Activated naive CD8-positive, alpha-beta T cell treated with anti-CD3 and anti-CD28 coated beads, Interleukin-2, amount 10 ng/mL, durations not matched to agents 7 days and 5 days (primary cell): ENCODE measurements at regions of chr11 and their contacts with region 1.

Region 1: DNA sequence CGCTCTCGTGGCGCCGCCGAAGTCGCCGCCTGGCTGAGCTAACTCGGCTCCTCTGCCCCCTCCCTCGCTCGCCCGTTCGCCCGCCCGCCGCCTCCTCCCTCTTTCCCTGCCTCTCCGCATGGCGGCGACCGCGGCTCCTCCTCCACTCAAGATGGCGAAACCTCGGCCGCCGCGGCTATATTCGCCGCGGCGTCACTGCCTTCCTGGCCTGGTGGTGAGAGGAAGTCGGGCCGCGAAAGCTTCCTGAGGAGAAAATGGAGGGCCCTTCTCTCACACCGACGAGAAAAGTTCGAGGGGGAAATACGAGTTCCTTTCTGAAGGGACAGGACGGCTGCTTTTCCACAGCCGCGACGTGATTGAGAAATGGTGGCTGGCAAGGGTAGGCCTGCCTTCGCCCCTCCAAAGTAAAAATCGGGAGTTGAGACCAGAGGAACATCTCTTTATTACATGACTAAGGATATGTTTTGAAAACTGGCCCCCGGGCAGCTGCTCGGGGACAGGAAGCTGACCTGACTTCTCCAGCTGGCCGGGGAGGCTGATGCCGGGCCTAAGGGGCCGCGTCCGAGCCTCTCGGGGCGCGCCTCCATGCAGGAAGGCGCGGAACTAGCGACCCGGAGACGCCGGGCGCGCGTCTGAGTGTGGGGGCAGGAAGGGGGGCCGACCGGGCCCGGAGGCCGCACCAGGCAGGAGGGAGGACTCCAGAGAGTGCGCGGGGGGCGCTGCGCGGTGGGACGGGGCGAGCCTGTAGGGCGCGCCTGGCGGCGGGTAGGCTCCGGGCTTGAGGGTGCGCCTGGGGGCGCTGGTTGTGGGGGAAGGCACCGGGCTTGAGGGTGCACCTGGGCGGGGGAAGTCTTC is at the start of gene DDX6:
- DNase-seq: peak; percentile 92
- ATAC-seq: peak; percentile 59
- H3K4me3 Mint-ChIP-seq: peak within 1 kb of the TSS; percentile 100
- H3K27ac Mint-ChIP-seq: peak within 1 kb of the TSS; percentile 100
- H3K4me1 Mint-ChIP-seq: peaks cover 25% of the 10 kb centered on the region
- H3K27me3 Mint-ChIP-seq: no peaks in the 10 kb centered on the region
- total RNA-seq, gene DDX6: 193 to 212 TPM

Region 2: DNA sequence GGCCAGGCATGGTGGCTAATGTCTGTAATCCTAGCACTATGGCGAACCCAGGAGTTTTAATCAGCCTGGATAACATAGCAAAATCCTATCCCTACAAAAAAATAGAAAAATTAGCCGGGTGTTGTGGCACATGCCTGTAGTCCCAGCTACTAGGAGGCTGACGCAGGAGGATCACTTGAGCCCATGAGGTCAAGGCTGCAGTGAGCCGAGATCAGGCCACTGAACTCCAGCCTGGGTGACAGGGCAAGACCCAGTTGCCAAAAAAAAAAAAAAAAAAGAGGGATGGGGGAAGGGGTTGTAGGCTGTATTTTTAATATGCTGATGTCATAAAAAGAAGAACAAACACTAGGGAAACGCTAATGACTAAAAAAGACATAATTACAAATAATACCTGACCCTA is 12.4 kb before region 1 on chr11:
- POLR2A ChIA-PET with region 1: interaction called, 10 read pairs
- DNase-seq: no peak
- ATAC-seq: no peak
- H3K4me3 Mint-ChIP-seq: no peak overlapping the region
- H3K27ac Mint-ChIP-seq: no peak overlapping the region
- H3K4me1 Mint-ChIP-seq: peaks cover 17% of the 10 kb centered on the region
- H3K27me3 Mint-ChIP-seq: no peaks in the 10 kb centered on the region

Region 3: DNA sequence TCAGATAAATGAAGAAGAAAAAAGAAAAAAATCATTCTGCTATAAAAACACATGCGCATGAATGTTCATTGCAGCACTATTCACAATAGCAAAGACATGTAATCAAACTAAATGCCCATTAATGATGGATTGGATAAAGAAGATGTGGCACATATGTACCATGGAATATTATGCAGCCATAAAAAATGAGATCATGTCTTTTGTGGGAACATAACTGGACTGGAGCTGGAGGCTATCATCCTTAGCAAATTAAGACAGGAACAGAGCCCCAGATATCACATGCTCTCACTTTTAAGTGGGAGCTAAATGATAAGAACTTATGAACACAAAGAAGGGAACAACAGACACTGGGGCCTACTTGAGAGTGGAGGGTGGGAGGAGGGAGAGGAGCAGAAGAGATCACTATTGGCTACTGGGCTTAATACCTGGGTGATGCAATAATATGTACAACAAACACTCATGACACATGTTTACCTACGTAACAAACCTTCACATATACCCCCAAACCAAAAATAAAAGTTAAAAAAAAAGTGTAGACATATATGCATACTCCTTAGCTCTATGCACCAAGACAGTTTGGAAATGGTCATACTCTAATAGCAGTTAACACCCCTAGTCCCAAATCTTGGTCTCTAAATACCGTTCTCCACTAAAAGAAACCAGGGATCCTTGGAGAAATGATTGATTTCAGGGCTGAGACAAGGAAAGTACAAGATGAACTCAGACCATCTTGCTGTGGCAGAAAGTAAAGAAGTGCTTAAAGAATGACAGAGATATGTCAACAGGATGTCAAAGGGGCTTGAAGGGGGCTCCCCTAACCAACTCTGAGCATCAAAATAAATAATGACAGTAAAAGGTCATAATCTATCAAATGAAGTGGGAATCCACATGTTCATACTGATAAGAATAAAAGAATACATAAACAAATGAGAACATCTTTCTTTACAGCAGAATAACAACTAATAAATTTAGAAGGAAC is 16.8 kb after region 1 on chr11:
- POLR2A ChIA-PET with region 1: no interaction called
- DNase-seq: no peak
- ATAC-seq: no peak
- H3K4me3 Mint-ChIP-seq: no peak overlapping the region
- H3K27ac Mint-ChIP-seq: peak overlapping the region; percentile 2
- H3K4me1 Mint-ChIP-seq: peaks cover 8% of the 10 kb centered on the region
- H3K27me3 Mint-ChIP-seq: no peaks in the 10 kb centered on the region

Region 4: GRCh38 chr11:118834427-118835028 is 43.2 kb after region 1 on chr11:
- POLR2A ChIA-PET with region 1: interaction called, 11 read pairs
- DNase-seq: no peak
- ATAC-seq: peak; percentile 79
- H3K4me3 Mint-ChIP-seq: peak overlapping the region; percentile 60
- H3K27ac Mint-ChIP-seq: peak overlapping the region; percentile 69
- H3K4me1 Mint-ChIP-seq: peaks cover 14% of the 10 kb centered on the region
- H3K27me3 Mint-ChIP-seq: no peaks in the 10 kb centered on the region

Region 5: GRCh38 chr11:118878163-118878563 is 86.8 kb after region 1 on chr11:
- POLR2A ChIA-PET with region 1: interaction called, 111 read pairs
- DNase-seq: no peak
- ATAC-seq: peak; percentile 37
- H3K4me3 Mint-ChIP-seq: peak overlapping the region; percentile 6
- H3K27ac Mint-ChIP-seq: peak overlapping the region; percentile 99
- H3K4me1 Mint-ChIP-seq: peaks cover 70% of the 10 kb centered on the region
- H3K27me3 Mint-ChIP-seq: no peaks in the 10 kb centered on the region

Region 6: GRCh38 chr11:118911892-118912744 is 120.8 kb after region 1 on chr11:
- POLR2A ChIA-PET with region 1: interaction called, 30 read pairs
- DNase-seq: peak; percentile 68
- ATAC-seq: peak; percentile 15
- H3K4me3 Mint-ChIP-seq: peak overlapping the region; percentile 84
- H3K27ac Mint-ChIP-seq: peak overlapping the region; percentile 98
- H3K4me1 Mint-ChIP-seq: peaks cover 67% of the 10 kb centered on the region
- H3K27me3 Mint-ChIP-seq: no peaks in the 10 kb centered on the region

Region 7: GRCh38 chr11:118939953-118940598 is 148.7 kb after region 1 on chr11:
- POLR2A ChIA-PET with region 1: interaction called, 12 read pairs
- DNase-seq: peak; percentile 69
- ATAC-seq: peak; percentile 95
- H3K4me3 Mint-ChIP-seq: peak overlapping the region; percentile 58
- H3K27ac Mint-ChIP-seq: peak overlapping the region; percentile 80
- H3K4me1 Mint-ChIP-seq: peaks cover 30% of the 10 kb centered on the region
- H3K27me3 Mint-ChIP-seq: peaks cover 3% of the 10 kb centered on the region